Natural killer cell (primary cell): ENCODE measurements at regions of chr3 and their contacts with region 1.

Region 1: GRCh38 chr3:132573797-132574211 is 23.3 kb upstream of the ACKR4 start:
- DNase-seq: no peak
- ATAC-seq: no peak
- H3K4me3 ChIP-seq: no peak overlapping the region
- H3K4me3 Mint-ChIP-seq: no peak overlapping the region
- H3K27ac ChIP-seq: no peak overlapping the region
- H3K27ac Mint-ChIP-seq: no peak overlapping the region
- H3K4me1 ChIP-seq: no peaks in the 10 kb centered on the region
- H3K4me1 Mint-ChIP-seq: no peaks in the 10 kb centered on the region
- H3K27me3 ChIP-seq: no peaks in the 10 kb centered on the region
- H3K27me3 Mint-ChIP-seq: no peaks in the 10 kb centered on the region
- CTCF ChIP-seq: no peak

Region 2: DNA sequence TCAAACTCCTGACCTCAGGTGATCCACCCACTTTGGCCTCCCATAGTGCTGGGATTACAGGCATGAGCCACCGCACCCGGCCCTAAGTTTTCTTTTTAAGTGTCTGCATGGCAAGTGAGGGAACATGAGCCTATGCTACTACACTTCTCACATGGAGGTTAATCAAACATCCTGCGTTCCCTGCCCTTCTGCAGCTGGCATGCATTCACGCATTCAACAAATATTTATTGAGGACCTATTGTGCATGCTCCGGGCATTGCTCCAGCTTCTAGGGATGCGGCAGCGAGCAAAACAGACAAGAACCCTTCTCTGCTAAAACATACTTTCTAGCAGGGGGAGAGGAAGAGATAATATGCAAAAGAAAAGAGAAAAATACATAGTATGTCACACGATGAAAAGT is 19.4 kb before region 1 on chr3:
- intact Hi-C with region 1: loop called (anchors 2 kb)
- DNase-seq: no peak
- ATAC-seq: no peak
- H3K4me3 ChIP-seq: no peak overlapping the region
- H3K4me3 Mint-ChIP-seq: no peak overlapping the region
- H3K27ac ChIP-seq: no peak overlapping the region
- H3K27ac Mint-ChIP-seq: no peak overlapping the region
- H3K4me1 ChIP-seq: no peaks in the 10 kb centered on the region
- H3K4me1 Mint-ChIP-seq: peaks cover 5 to 17% of the 10 kb centered on the region in 2 donors
- H3K27me3 ChIP-seq: no peaks in the 10 kb centered on the region
- H3K27me3 Mint-ChIP-seq: no peaks in the 10 kb centered on the region
- CTCF ChIP-seq: no peak

Region 3: DNA sequence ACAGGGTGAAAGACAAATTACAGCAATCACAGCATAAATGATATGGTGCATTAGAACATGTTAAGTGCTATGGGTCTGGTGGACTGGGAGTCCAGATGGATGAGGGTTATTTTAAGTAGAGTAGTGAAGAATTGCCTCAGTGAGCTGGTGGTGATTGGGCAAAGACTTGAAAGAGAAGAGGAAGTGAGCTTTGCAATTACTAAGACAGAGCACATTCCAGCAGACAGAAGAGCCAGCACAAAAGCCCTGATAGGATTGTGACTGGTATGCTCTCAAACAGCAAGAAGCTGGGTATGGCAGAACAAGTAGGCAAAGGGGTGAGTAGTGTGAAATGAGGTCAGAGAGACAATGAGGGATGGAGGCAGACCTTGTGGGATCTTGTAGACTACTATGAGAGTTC is 21.2 kb after region 1 on chr3:
- intact Hi-C with region 1: no loop called
- DNase-seq: no peak
- ATAC-seq: no peak
- H3K4me3 ChIP-seq: no peak overlapping the region
- H3K4me3 Mint-ChIP-seq: no peak overlapping the region
- H3K27ac ChIP-seq: no peak overlapping the region
- H3K27ac Mint-ChIP-seq: no peak overlapping the region
- H3K4me1 ChIP-seq: no peaks in the 10 kb centered on the region
- H3K4me1 Mint-ChIP-seq: peaks cover 0 to 5% of the 10 kb centered on the region in 2 donors
- H3K27me3 ChIP-seq: no peaks in the 10 kb centered on the region
- H3K27me3 Mint-ChIP-seq: no peaks in the 10 kb centered on the region
- CTCF ChIP-seq: no peak

Region 4: GRCh38 chr3:132911736-132912414 is 338.1 kb after region 1 on chr3:
- intact Hi-C with region 1: no loop called
- DNase-seq: no peak
- ATAC-seq: no peak
- H3K4me3 ChIP-seq: no peak overlapping the region
- H3K4me3 Mint-ChIP-seq: no peak overlapping the region
- H3K27ac ChIP-seq: no peak overlapping the region
- H3K27ac Mint-ChIP-seq: no peak overlapping the region
- H3K4me1 ChIP-seq: no peaks in the 10 kb centered on the region
- H3K4me1 Mint-ChIP-seq: no peaks in the 10 kb centered on the region
- H3K27me3 ChIP-seq: no peaks in the 10 kb centered on the region
- H3K27me3 Mint-ChIP-seq: no peaks in the 10 kb centered on the region
- CTCF ChIP-seq: no peak